GM13976 (cell line): ENCODE measurements at regions of chr10 and their contacts with region 1.

Region 1: GRCh38 chr10:102072673-102073527 is 7.8 kb downstream of the HPS6 start:
- DNase-seq: peak; percentile 82
- CTCF ChIP-seq: peak; percentile 89

Region 2: DNA sequence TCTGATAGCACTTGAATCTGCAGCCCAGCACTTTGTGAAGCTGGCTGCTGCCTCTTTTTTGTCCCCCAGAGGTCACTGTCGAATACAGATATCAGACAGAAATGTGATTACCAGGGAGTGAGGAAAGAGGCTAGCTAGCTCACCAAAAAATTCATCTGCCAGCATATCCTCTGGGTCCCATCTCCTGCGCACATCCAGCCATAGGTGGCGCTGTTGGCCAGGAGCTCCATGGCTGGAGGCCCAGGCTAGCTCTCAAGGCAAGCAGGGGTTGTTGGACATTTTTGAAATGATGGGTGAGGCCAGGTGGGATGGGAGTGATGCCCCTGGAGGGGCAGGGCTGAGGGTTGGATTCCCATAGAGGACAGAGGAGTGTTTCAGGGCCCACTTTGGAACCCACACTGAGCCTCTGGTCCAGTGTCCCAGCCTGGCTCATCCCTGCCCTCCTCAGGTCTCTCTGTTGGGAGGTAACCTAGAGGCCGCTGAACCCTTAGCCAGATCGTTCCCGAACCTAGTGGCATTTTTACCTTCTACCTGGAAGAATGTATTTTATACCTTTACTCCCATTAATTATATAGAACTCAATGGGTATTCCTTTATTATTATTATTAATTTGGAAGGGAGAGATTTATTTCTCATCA is 470.0 kb before region 1 on chr10:
- in situ Hi-C with region 1: loop called (anchors 10 kb)
- DNase-seq: peak; percentile 88
- CTCF ChIP-seq: peak; percentile 97

Region 3: GRCh38 chr10:101644002-101644401 is 428.9 kb before region 1 on chr10:
- in situ Hi-C with region 1: no loop called
- DNase-seq: no peak
- CTCF ChIP-seq: no peak